ENCODE measurements at regions of chr1 and their contacts with region 1.

Region 1: GRCh38 chr1:165768513-165769394 is at the start of gene TMCO1:
- DNase-seq: peak; percentile 90 to 99
- H3K4me3 ChIP-seq: peak within 1 kb of the TSS; percentile 86 to 93
- H3K27ac ChIP-seq: peak within 1 kb of the TSS; percentile 88 to 92
- H3K4me1 ChIP-seq: peaks cover 6 to 23% of the 10 kb centered on the region in 2 donors
- H3K27me3 ChIP-seq: no peaks in the 10 kb centered on the region
- CTCF ChIP-seq: peak in 1 of 3 experiments; percentile 8
- total RNA-seq, gene TMCO1: 9.9 TPM

Region 2: DNA sequence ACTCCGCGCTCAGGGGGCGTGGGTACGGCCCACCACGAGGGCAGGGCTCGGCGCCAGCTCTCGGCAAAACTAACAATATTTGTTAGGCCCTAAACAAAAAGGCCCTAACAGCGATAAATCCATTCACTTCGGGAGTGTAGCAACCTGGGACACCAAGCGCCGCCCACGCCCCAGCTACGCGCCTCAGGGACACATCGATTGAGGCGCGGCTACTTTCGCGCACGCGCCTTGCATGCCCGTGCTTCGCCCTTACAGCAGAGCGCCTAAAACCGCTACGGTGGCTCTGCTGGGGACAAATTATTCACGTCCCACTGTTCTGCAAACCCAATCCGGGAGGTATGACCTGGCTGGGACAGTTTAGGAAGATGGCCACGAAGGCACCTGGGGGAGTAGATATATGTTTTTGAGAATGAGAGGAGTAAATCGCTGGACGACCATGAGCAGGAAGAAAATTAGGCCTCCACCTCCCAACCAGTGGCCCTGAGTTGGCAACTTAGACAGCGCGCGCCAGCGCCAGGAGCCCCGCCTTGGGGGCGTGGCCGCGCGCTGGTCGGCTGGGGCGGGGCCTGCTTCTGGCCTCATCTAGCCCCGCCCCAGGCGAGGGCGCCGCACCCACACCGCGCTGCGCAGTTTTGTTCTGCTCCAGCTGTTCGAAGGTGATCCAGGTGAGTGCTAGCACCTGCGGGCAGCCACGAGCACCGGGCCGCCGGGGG is 138.0 kb before region 1 on chr1 and contains the start of gene MGST3:
- intact Hi-C with region 1: loop called (anchors 2 kb)
- DNase-seq: peak; percentile 80 to 98
- H3K4me3 ChIP-seq: peak within 1 kb of the TSS; percentile 71 to 90
- H3K27ac ChIP-seq: peak within 1 kb of the TSS; percentile 90 to 91
- H3K4me1 ChIP-seq: peaks cover 3 to 20% of the 10 kb centered on the region in 2 donors
- H3K27me3 ChIP-seq: no peaks in the 10 kb centered on the region
- CTCF ChIP-seq: no peak
- total RNA-seq, gene MGST3: 177 TPM

Region 3: GRCh38 chr1:165697881-165698760 is 70.6 kb before region 1 on chr1 and contains the start of gene ALDH9A1:
- intact Hi-C with region 1: loop called (anchors 2 kb)
- DNase-seq: peak; percentile 63 to 95
- H3K4me3 ChIP-seq: peak within 1 kb of the TSS; percentile 85 to 86
- H3K27ac ChIP-seq: peak within 1 kb of the TSS; percentile 95 to 97
- H3K4me1 ChIP-seq: peaks cover 4 to 12% of the 10 kb centered on the region in 2 donors
- H3K27me3 ChIP-seq: no peaks in the 10 kb centered on the region
- CTCF ChIP-seq: peak; percentile 8 to 37 (median 17)
- total RNA-seq, gene ALDH9A1: 58.0 TPM

Region 4: GRCh38 chr1:165898837-165899236 is 130.1 kb after region 1 on chr1:
- intact Hi-C with region 1: loop called (anchors 1 kb)
- DNase-seq: peak; percentile 65 to 91
- H3K4me3 ChIP-seq: no peak overlapping the region
- H3K27ac ChIP-seq: peak overlapping the region; percentile 93 to 95
- H3K4me1 ChIP-seq: peaks cover 21 to 47% of the 10 kb centered on the region in 2 donors
- H3K27me3 ChIP-seq: no peaks in the 10 kb centered on the region
- CTCF ChIP-seq: no peak

Region 5: GRCh38 chr1:165914136-165914798 is 145.5 kb after region 1 on chr1:
- intact Hi-C with region 1: loop called (anchors 2 kb)
- DNase-seq: peak in 1 of 2 donors; percentile 84
- H3K4me3 ChIP-seq: no peak overlapping the region
- H3K27ac ChIP-seq: peak overlapping the region in 1 of 2 donors; percentile 32
- H3K4me1 ChIP-seq: peaks cover 0 to 3% of the 10 kb centered on the region in 2 donors
- H3K27me3 ChIP-seq: no peaks in the 10 kb centered on the region
- CTCF ChIP-seq: peak; percentile 86 to 91 (median 87)